ENCODE measurements at regions of chr9 and their contacts with region 1.

Region 1: GRCh38 chr9:115640887-115641286 is 512.7 kb upstream of the PAPPA start:
- DNase-seq: no peak
- H3K4me3 ChIP-seq: no peak overlapping the region
- H3K27ac ChIP-seq: no peak overlapping the region
- H3K4me1 ChIP-seq: no peaks in the 10 kb centered on the region
- H3K27me3 ChIP-seq: no peaks in the 10 kb centered on the region
- CTCF ChIP-seq: no peak
- EP300 ChIP-seq: no peak
- POLR2A ChIP-seq: no peak

Region 2: GRCh38 chr9:115395511-115396021 is 245.3 kb before region 1 on chr9:
- intact Hi-C with region 1: no loop called
- DNase-seq: no peak
- H3K4me3 ChIP-seq: no peak overlapping the region
- H3K27ac ChIP-seq: no peak overlapping the region
- H3K4me1 ChIP-seq: no peaks in the 10 kb centered on the region
- H3K27me3 ChIP-seq: no peaks in the 10 kb centered on the region
- CTCF ChIP-seq: no peak
- EP300 ChIP-seq: no peak
- POLR2A ChIP-seq: no peak

Region 3: GRCh38 chr9:115531410-115532125 is 109.3 kb before region 1 on chr9:
- intact Hi-C with region 1: loop called in 1 of 4 experiments (anchors 5 kb)
- DNase-seq: no peak
- H3K4me3 ChIP-seq: no peak overlapping the region
- H3K27ac ChIP-seq: no peak overlapping the region
- H3K4me1 ChIP-seq: no peaks in the 10 kb centered on the region
- H3K27me3 ChIP-seq: no peaks in the 10 kb centered on the region
- CTCF ChIP-seq: no peak
- EP300 ChIP-seq: no peak
- POLR2A ChIP-seq: no peak

Region 4: DNA sequence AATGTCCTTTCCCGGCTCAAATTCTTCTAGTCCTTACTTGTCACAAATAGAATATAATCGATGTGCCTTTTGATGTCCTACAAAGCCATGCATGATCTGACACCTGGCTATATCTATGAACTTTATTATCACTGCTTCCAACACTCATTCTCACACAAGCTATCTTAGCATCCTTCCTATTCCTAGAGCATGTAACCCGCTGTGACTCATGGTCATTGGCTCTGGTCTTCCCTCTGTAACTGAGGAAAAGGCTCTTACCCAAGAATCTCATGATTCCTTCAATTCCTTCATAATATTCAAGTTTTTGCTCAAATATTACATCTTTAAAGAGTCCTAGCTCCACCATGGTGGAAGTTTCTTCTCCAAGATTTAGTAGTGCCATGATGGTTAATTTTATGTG is 32.7 kb after region 1 on chr9:
- intact Hi-C with region 1: loop called in 1 of 4 experiments (anchors 2 kb)
- DNase-seq: no peak
- H3K4me3 ChIP-seq: no peak overlapping the region
- H3K27ac ChIP-seq: no peak overlapping the region
- H3K4me1 ChIP-seq: no peaks in the 10 kb centered on the region
- H3K27me3 ChIP-seq: no peaks in the 10 kb centered on the region
- CTCF ChIP-seq: no peak
- EP300 ChIP-seq: no peak
- POLR2A ChIP-seq: no peak